CD4-positive, alpha-beta memory T cell (primary cell): ENCODE measurements at regions of chr19 and their contacts with region 1.

Region 1: GRCh38 chr19:15264061-15264932 is 32.0 kb upstream of the EPHX3 start:
- DNase-seq: peak; percentile 51 to 66 (median 62)
- H3K4me3 ChIP-seq: no peak overlapping the region
- H3K4me3 Mint-ChIP-seq: no peak overlapping the region
- H3K27ac ChIP-seq: no peak overlapping the region
- H3K27ac Mint-ChIP-seq: peak overlapping the region in 2 of 7 donors; percentile 52 to 61
- H3K4me1 ChIP-seq: no peaks in the 10 kb centered on the region
- H3K4me1 Mint-ChIP-seq: peaks cover 2 to 13% (median 8%) of the 10 kb centered on the region in 4 donors
- H3K27me3 ChIP-seq: no peaks in the 10 kb centered on the region
- H3K27me3 Mint-ChIP-seq: no peaks in the 10 kb centered on the region

Region 2: DNA sequence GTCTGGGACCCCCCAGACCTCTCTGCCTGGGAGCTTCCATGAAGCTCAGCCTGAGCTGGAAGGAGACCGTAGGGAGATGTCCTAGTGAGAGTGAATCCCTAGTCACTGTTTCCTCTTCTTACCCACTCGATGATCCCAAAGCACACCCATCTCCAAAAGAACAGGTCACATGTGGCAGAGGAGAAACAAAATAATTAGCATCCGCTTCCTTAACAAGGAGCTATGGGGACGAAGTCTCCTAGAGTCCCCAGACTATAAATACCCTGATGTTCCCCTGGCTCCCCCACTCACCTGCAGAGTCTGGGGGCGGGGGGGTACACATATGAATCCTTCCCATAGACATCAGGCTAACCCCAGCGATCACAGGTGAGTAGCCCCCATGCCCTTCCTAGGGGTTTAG is 182.4 kb before region 1 on chr19 and contains the start of gene OR1I1:
- CTCF ChIA-PET with region 1: no interaction called
- POLR2A ChIA-PET with region 1: no interaction called
- intact Hi-C with region 1: no loop called
- DNase-seq: no peak
- H3K4me3 ChIP-seq: no peak within 1 kb of the TSS
- H3K4me3 Mint-ChIP-seq: no peak within 1 kb of the TSS
- H3K27ac ChIP-seq: no peak within 1 kb of the TSS
- H3K27ac Mint-ChIP-seq: no peak within 1 kb of the TSS
- H3K4me1 ChIP-seq: no peaks in the 10 kb centered on the region
- H3K4me1 Mint-ChIP-seq: no peaks in the 10 kb centered on the region
- H3K27me3 ChIP-seq: no peaks in the 10 kb centered on the region
- H3K27me3 Mint-ChIP-seq: peaks cover 15 to 24% of the 10 kb centered on the region in 2 donors
- total RNA-seq, gene OR1I1: not detected

Region 3: DNA sequence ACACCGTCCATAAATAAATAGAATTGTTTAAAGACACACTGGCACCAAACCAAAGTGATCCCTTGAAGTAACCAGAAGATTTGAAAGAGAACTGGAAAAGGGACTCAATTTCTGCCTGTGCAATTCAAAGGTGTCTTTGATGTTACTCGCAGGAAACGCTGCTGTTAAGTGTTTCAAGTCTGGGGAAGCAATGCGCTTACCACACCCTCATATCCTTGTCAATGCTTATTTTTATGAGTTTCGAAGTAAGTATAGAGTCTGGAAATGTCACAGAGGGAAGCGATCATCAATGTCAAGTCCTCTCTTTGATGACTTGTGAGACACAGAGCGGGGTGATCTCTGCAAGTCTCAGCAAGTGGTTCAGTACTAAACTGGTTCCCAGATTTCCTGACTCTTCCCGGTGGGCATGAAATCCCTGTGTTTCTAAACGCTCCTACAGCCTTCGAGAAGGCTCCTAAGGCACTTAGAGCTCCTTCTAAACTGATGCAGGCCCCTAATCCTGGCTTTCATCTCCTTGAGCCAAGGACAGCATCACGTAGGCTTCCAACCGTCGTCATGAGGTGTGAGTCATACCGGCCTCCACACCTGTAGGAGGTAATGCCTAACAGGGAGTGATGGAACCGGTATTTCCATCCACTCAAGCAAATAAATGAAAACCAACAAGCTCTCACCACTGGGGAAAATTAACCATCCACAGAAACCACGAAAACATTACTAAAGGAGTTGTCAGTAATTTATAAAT is 134.3 kb before region 1 on chr19:
- CTCF ChIA-PET with region 1: no interaction called
- POLR2A ChIA-PET with region 1: no interaction called
- intact Hi-C with region 1: no loop called
- DNase-seq: peak; percentile 23 to 61 (median 34)
- H3K4me3 ChIP-seq: peak overlapping the region in 1 of 2 donors; percentile 8
- H3K4me3 Mint-ChIP-seq: peak overlapping the region in 7 of 8 donors; percentile 4 to 76 (median 61)
- H3K27ac ChIP-seq: no peak overlapping the region
- H3K27ac Mint-ChIP-seq: peak overlapping the region in 6 of 7 donors; percentile 19 to 77 (median 43)
- H3K4me1 ChIP-seq: peaks cover 22% of the 10 kb centered on the region
- H3K4me1 Mint-ChIP-seq: peaks cover 16 to 33% (median 26%) of the 10 kb centered on the region in 4 donors
- H3K27me3 ChIP-seq: no peaks in the 10 kb centered on the region
- H3K27me3 Mint-ChIP-seq: peaks cover 2 to 6% of the 10 kb centered on the region in 2 donors

Region 4: GRCh38 chr19:15154002-15154612 is 110.2 kb before region 1 on chr19:
- CTCF ChIA-PET with region 1: no interaction called
- POLR2A ChIA-PET with region 1: no interaction called
- intact Hi-C with region 1: no loop called
- DNase-seq: no peak
- H3K4me3 ChIP-seq: no peak overlapping the region
- H3K4me3 Mint-ChIP-seq: no peak overlapping the region
- H3K27ac ChIP-seq: no peak overlapping the region
- H3K27ac Mint-ChIP-seq: no peak overlapping the region
- H3K4me1 ChIP-seq: no peaks in the 10 kb centered on the region
- H3K4me1 Mint-ChIP-seq: peaks cover 0 to 5% (median 4%) of the 10 kb centered on the region in 4 donors
- H3K27me3 ChIP-seq: no peaks in the 10 kb centered on the region
- H3K27me3 Mint-ChIP-seq: peaks cover 14 to 21% of the 10 kb centered on the region in 2 donors

Region 5: DNA sequence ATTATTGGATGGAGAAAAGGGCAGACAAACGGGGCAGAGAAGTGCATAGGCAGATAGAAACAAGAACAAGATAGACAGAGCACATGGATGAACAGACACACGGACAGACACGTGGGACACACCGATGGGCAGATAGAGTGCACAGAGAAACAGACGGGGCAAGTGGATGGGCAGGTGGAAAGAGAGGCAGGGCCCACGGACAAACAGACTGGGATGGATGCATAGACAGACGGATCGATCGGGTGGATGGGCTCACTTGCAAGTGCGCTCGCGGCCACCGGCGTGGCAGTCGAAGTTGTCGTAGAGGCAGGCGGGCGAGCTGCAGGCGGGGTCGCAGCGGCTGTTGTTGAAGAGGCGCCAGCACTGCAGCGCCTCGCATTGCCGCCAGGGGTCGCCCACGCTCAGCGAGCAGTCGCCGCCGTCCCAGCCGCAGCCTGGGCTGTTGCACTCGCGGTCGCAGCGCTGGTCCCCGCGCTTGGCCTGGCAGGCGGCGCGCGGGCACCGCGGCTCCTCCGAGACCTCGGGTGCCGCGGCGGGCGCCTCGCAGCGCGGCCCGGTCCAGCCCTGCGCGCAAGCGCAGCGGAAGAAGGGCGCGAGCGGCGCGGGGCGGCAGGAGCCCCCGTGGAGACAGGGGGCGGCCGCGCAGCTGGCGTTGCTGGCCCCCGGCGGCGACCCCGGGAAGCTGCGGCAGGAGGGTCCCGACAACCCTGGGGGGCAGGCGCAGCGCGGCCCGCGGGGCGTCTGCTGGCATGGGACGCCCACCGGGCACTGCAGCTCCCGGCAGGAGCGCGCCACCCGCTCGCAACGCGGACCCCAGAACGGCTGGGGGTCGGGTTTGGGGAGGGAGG is 86.8 kb before region 1 on chr19:
- CTCF ChIA-PET with region 1: no interaction called
- POLR2A ChIA-PET with region 1: no interaction called
- intact Hi-C with region 1: loop called (anchors 5 kb)
- DNase-seq: peak; percentile 69 to 83 (median 80)
- H3K4me3 ChIP-seq: no peak overlapping the region
- H3K4me3 Mint-ChIP-seq: peak overlapping the region in 5 of 8 donors; percentile 2 to 74 (median 57)
- H3K27ac ChIP-seq: no peak overlapping the region
- H3K27ac Mint-ChIP-seq: peak overlapping the region in 2 of 7 donors; percentile 30 to 75
- H3K4me1 ChIP-seq: peaks cover 3% of the 10 kb centered on the region
- H3K4me1 Mint-ChIP-seq: peaks cover 4 to 11% (median 6%) of the 10 kb centered on the region in 4 donors
- H3K27me3 ChIP-seq: no peaks in the 10 kb centered on the region
- H3K27me3 Mint-ChIP-seq: peaks cover 7 to 11% of the 10 kb centered on the region in 2 donors